Common myeloid progenitor, CD34-positive (primary cell): ENCODE measurements at regions of chr9 and their contacts with region 1.

Region 1: DNA sequence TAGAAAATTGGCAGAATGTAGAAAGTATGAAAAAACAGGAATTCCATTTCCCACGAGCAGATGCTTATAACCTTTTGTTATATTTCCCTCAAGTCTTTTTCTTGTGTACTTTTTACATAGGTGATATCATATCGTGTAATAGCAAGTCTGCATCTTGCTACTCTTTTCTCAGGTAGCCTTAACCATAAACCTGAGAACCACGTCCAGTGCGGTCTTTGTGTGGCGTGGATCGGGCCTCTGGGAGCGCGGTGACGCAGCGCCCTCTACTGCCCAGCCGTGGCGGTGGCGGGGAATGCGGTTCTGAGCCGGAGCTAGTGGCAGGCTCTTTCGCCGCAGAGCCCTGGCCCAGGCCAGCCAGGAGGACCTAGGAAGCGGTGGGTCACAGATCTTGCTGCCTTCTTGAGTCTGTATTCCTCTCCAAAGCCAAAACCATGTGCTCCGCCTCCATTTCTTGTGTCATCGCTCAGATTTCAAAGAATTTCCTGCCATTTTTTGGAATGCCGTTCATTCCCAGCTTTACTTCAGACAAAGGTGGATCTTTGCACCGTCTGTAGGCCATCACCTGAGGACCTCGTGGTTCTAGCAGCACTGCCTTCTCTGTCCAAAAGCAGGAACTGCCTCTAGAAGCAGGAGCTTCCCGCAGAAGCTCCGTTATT is 71.9 kb downstream of the MVB12B start:
- DNase-seq: peak; percentile 50 to 71 (median 69)
- H3K4me3 ChIP-seq: no peak overlapping the region
- H3K27ac ChIP-seq: no peak overlapping the region
- H3K4me1 ChIP-seq: peaks cover 9 to 42% (median 28%) of the 10 kb centered on the region in 4 experiments
- H3K27me3 ChIP-seq: no peaks in the 10 kb centered on the region

Region 2: DNA sequence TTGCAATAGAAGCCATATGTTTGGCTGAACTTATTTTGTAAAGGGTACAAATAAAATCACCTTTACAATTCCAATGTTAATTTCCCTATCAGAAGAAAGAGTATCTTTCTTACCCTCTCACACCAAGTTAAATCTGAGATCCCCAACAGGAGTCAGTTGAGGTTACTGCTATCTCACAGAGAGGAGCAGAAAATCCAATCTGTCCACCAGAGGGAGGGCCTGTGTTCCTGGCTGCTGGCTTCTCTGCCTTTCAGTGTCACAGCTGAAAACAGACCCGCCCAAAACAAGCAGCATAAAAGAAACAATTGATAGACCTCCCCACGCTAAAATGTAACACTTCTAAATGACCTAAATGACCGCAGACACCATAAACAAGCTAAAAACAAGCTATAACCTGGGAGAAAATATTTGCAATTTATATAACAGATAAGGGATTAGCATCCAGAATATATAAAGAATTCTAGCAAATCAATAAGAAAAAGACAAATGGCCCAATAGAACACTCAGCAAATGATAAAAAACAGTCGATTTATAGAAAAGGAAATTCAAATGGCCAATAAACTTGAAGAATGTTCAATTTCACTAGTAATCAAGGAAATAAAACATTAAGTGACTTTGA is 96.4 kb before region 1 on chr9:
- CTCF ChIA-PET with region 1: interaction called, 67 read pairs
- POLR2A ChIA-PET with region 1: no interaction called
- DNase-seq: peak; percentile 71 to 85 (median 84)
- H3K4me3 ChIP-seq: no peak overlapping the region
- H3K27ac ChIP-seq: no peak overlapping the region
- H3K4me1 ChIP-seq: no peaks in the 10 kb centered on the region
- H3K27me3 ChIP-seq: no peaks in the 10 kb centered on the region

Region 3: DNA sequence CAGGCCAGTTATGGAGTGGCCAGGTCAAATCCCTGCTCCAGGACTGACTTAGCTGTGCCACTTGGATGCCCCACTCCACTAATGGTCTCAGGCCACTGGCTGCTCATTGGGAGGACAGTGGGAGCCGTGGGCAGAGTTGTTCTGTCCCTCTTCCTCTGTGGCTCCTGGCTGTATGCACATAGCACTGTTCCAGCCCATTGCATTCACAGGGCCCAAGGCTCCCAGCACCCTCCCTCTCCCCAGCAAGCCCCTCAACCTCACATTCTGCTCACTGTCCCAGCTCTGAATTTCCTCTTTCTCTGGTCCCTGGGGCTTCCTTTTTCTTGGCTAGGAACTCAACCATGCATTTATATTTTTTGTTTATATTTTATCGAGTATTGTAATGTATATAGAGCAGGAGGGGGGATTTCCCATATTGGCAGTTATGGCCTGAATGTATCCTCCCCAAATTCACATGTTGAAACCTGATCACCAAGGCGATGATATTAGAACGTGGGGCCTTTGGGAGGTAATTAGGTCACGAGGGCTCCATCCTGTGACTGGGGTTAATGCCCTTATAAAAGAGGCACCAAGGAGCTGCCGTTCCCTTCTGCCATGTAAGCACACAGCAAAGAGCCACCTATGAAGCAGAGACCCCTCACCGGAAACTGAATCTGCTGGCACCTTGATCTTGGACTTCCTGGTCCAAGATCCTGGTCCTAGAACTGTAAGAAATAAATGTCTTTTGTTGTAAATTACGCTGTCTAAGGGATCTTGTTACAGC is 88.9 kb before region 1 on chr9:
- CTCF ChIA-PET with region 1: interaction called, 230 read pairs
- POLR2A ChIA-PET with region 1: no interaction called
- DNase-seq: peak in 1 of 3 donors; percentile 14
- H3K4me3 ChIP-seq: no peak overlapping the region
- H3K27ac ChIP-seq: no peak overlapping the region
- H3K4me1 ChIP-seq: peaks cover 0 to 9% (median 0%) of the 10 kb centered on the region in 4 experiments
- H3K27me3 ChIP-seq: no peaks in the 10 kb centered on the region

Region 4: GRCh38 chr9:126317513-126317912 is 81.0 kb before region 1 on chr9:
- CTCF ChIA-PET with region 1: interaction called, 230 read pairs
- POLR2A ChIA-PET with region 1: no interaction called
- DNase-seq: peak; percentile 56 to 84 (median 81)
- H3K4me3 ChIP-seq: no peak overlapping the region
- H3K27ac ChIP-seq: no peak overlapping the region
- H3K4me1 ChIP-seq: peaks cover 0 to 4% (median 0%) of the 10 kb centered on the region in 4 experiments
- H3K27me3 ChIP-seq: no peaks in the 10 kb centered on the region

Region 5: DNA sequence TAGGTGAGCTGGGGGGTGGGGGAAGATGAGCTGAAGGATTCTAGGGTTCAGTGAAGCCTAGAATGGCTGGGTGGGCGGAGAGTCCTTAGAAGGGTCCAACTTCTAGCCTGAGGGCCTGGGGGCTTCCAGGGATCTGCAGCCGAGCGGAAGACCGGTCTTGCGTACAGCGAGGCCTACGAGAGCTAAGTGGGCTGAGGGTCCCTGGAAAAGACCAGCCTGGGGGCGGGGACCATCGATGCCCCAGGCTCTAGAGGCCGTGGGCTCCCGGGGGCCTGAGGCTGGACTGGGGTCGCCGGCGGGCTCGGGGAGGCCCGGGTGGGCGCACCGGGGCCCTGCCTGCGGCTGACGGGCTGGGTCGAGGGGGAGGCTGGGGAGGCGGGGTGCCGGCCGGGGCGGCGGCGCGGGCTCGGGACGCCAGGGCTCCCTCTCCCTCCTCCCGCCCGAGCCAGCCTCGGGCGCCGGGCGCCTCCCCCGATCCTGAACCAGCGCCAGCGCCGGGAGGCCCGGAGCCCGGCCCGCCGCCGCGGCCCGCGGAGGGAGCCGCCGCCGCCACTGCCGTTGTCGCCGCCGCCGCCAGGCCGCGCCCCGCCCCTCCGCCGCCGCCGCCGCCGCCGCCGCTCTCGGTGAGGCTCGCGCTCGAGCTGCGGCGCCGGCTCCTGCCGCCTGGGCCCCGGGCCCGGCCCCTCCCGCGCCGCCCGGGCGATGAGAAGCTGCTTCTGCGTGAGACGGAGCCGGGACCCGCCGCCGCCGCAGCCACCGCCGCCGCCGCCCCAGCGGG is 72.1 kb before region 1 on chr9 and contains the start of gene MVB12B:
- CTCF ChIA-PET with region 1: interaction called, 230 read pairs
- POLR2A ChIA-PET with region 1: no interaction called
- DNase-seq: peak; percentile 38 to 74 (median 64)
- H3K4me3 ChIP-seq: peak within 1 kb of the TSS; percentile 42 to 79 (median 65)
- H3K27ac ChIP-seq: peak within 1 kb of the TSS in 1 of 2 experiments; percentile 64
- H3K4me1 ChIP-seq: peaks cover 0 to 14% (median 13%) of the 10 kb centered on the region in 4 experiments
- H3K27me3 ChIP-seq: no peaks in the 10 kb centered on the region

Region 6: DNA sequence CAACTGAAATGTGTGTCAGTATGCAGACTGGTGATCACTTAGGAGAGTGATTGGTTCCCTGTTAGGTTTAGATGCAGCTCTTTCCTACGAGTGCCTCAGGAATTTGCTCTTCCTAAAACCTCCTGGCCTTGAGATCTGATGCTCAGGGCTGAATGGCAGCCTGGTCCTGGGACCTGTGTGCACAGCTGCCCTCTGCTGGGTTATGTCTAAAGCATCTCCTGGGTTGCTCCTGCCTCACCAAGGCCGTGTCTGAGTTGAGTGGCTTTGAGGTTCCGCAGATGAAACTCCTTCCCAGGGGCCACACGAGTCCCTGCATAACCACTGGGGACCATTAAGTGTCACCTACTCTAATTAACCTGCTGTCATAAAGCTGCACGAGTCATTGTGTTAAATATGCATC is 12.4 kb before region 1 on chr9:
- CTCF ChIA-PET with region 1: interaction called, 37 read pairs
- POLR2A ChIA-PET with region 1: no interaction called
- DNase-seq: peak; percentile 25 to 53 (median 39)
- H3K4me3 ChIP-seq: no peak overlapping the region
- H3K27ac ChIP-seq: no peak overlapping the region
- H3K4me1 ChIP-seq: peaks cover 8 to 24% (median 15%) of the 10 kb centered on the region in 4 experiments
- H3K27me3 ChIP-seq: no peaks in the 10 kb centered on the region

Region 7: DNA sequence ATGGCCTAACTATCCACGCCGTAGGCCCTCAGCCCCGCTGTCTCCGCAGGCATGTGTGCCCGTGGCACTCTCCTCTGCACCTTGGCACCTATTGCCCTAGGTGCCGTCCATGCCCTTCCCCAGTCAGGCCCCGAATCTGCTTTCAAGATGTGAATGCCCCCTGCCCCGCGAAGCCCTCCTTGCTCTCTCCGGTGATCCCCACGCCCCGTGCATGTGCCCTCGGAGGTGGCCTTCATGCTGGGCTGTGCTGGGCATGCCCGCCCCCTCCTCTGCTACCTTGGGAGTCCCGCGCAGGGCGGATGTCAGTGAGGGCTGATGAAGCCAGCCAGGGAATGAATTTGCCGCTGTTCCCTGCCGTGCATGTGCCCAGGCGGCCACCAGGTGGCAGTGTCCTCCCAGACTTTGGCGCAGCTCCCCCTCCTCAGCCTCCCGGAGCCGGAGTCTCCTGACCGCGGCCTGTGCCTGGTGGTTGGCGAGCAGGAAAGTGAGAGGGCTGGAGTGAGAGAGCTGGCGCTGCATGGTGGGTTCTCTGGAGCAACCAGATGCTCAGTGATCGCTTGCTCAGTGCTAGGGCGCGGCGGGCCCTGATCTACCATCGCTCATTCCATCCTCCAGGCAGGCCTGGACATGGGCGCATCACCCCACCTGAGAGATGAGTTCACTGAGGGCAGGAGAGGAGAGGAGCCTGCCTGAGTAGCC is 102.3 kb after region 1 on chr9:
- CTCF ChIA-PET with region 1: interaction called, 104 read pairs
- POLR2A ChIA-PET with region 1: no interaction called
- DNase-seq: peak; percentile 67 to 83 (median 81)
- H3K4me3 ChIP-seq: no peak overlapping the region
- H3K27ac ChIP-seq: no peak overlapping the region
- H3K4me1 ChIP-seq: peaks cover 2 to 49% (median 43%) of the 10 kb centered on the region in 4 experiments
- H3K27me3 ChIP-seq: peaks cover 0 to 15% (median 0%) of the 10 kb centered on the region in 5 experiments